GM12878 (cell line): ENCODE measurements at regions of chr1 and their contacts with region 1.

Region 1: GRCh38 chr1:220879076-220879508 is at the start of gene HLX:
- DNase-seq: no peak
- ATAC-seq: peak; percentile 82
- H3K4me3 ChIP-seq: peak within 1 kb of the TSS; percentile 68
- H3K27ac ChIP-seq: no peak within 1 kb of the TSS
- H3K4me1 ChIP-seq: peaks cover 15% of the 10 kb centered on the region
- H3K27me3 ChIP-seq: peaks cover 0 to 17% of the 10 kb centered on the region in 2 experiments; a peak in 3 of 4 replicates
- CTCF ChIP-seq: no peak
- EP300 ChIP-seq: no peak
- POLR2A ChIP-seq: no peak
- RAD21 ChIP-seq: no peak
- polyA plus RNA-seq, gene HLX: 0.11 to 0.22 TPM

Region 2: DNA sequence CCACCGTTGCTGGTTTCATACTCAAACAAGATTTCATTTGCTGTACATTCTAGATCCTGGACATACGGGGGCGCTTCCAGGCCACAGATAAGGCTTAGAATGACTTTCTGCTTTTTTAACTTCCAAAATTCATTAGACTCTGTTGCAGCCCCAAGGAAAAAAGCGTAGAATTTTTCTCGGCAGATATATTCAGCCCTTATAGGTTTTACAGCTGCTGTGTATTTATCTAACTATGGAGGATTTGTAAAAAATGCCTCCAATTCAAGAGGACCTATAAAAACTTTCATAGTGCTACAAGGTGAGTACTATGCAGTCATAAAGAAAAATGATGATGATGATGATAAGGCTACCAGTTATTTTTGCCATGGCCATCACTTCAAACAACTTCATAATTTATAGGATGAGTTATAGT is 1002.3 kb before region 1 on chr1:
- CTCF ChIA-PET with region 1: no interaction called
- POLR2A ChIA-PET with region 1: no interaction called
- RAD21 ChIA-PET with region 1: no interaction called
- SMC1A ChIA-PET with region 1: no interaction called
- in situ Hi-C with region 1: no loop called
- intact Hi-C with region 1: no loop called
- DNase-seq: no peak
- ATAC-seq: no peak
- H3K4me3 ChIP-seq: no peak overlapping the region
- H3K27ac ChIP-seq: no peak overlapping the region
- H3K4me1 ChIP-seq: no peaks in the 10 kb centered on the region
- H3K27me3 ChIP-seq: no peaks in the 10 kb centered on the region
- CTCF ChIP-seq: peak in 2 of 3 experiments; percentile 22 to 32; a peak in 3 of 6 replicates
- EP300 ChIP-seq: no peak
- POLR2A ChIP-seq: no peak
- RAD21 ChIP-seq: peak; percentile 47

Region 3: DNA sequence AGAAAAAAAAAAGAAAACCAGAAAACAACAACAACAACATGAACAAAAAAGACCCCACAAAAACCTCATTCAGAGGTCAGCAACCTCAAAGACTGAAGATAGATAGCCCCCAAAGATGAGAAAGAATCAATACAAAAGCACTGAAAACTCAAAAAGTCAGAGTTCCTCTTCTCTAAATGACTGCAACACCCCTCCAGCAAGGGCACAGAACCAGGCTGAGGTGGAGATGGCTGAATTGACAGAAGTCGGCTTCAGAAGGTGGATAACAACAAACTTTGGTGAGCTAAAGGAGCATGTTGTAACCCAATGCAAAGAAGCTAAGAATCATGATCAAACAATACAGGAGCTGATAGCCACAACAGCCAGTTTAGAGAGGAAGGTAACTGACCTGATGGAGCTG is 623.9 kb before region 1 on chr1:
- CTCF ChIA-PET with region 1: no interaction called
- POLR2A ChIA-PET with region 1: no interaction called
- RAD21 ChIA-PET with region 1: no interaction called
- SMC1A ChIA-PET with region 1: no interaction called
- in situ Hi-C with region 1: no loop called
- intact Hi-C with region 1: no loop called
- DNase-seq: no peak
- ATAC-seq: 0 out of 3 replicates have a peak, but pooled peaks have one; percentile 16
- H3K4me3 ChIP-seq: no peak overlapping the region
- H3K27ac ChIP-seq: no peak overlapping the region
- H3K4me1 ChIP-seq: no peaks in the 10 kb centered on the region
- H3K27me3 ChIP-seq: no peaks in the 10 kb centered on the region
- CTCF ChIP-seq: no peak
- EP300 ChIP-seq: no peak
- POLR2A ChIP-seq: no peak
- RAD21 ChIP-seq: no peak

Region 4: DNA sequence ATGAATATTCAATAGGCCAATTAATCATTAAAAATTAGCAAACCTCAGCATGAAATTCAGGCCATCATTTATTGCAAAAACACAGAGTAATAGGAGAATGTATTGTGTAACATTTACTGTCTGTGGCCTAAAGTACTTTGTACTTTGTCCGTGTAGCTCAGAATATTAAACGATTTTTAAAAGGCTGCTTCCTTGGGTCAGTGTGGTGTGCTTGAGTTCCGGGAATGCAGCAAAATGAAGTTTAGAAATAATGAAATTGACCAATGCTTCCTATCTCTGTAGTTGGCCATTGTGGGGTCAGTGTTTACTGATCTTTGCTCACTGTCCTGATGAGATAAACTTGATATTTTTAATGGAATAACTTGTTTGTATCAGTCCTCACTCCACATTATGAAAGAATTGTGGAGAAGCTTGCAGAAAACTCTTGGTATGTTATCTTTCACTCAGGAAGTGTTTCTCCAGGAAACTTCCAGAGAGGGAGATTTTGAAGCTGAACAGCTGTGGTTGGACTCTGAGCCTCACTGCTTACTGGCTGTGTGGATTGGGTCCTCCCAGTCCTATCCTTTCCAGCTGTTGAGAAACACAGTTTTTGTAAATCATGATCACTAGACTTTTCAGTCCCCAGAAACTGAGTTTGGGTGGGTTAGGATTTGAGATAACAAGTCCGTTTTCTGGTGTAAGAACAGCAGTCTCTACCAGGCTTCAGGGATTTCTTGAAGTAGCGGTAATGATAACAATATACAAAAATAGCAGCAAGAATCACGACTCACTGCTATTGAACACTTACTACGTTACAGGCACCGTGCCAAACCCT is 111.6 kb before region 1 on chr1:
- CTCF ChIA-PET with region 1: no interaction called
- POLR2A ChIA-PET with region 1: no interaction called
- RAD21 ChIA-PET with region 1: no interaction called
- SMC1A ChIA-PET with region 1: no interaction called
- in situ Hi-C with region 1: no loop called
- intact Hi-C with region 1: no loop called
- DNase-seq: no peak
- ATAC-seq: no peak
- H3K4me3 ChIP-seq: no peak overlapping the region
- H3K27ac ChIP-seq: no peak overlapping the region
- H3K4me1 ChIP-seq: no peaks in the 10 kb centered on the region; the same call in none of the 2 replicates
- H3K27me3 ChIP-seq: no peaks in the 10 kb centered on the region
- CTCF ChIP-seq: no peak
- EP300 ChIP-seq: no peak
- POLR2A ChIP-seq: no peak
- RAD21 ChIP-seq: no peak

Region 5: GRCh38 chr1:220841293-220841692 is 37.8 kb before region 1 on chr1:
- CTCF ChIA-PET with region 1: no interaction called
- POLR2A ChIA-PET with region 1: no interaction called
- RAD21 ChIA-PET with region 1: no interaction called
- SMC1A ChIA-PET with region 1: no interaction called
- in situ Hi-C with region 1: no loop called
- intact Hi-C with region 1: no loop called
- DNase-seq: no peak
- ATAC-seq: no peak
- H3K4me3 ChIP-seq: no peak overlapping the region
- H3K27ac ChIP-seq: no peak overlapping the region
- H3K4me1 ChIP-seq: no peaks in the 10 kb centered on the region
- H3K27me3 ChIP-seq: no peaks in the 10 kb centered on the region
- CTCF ChIP-seq: no peak
- EP300 ChIP-seq: no peak
- POLR2A ChIP-seq: no peak
- RAD21 ChIP-seq: no peak

Region 6: DNA sequence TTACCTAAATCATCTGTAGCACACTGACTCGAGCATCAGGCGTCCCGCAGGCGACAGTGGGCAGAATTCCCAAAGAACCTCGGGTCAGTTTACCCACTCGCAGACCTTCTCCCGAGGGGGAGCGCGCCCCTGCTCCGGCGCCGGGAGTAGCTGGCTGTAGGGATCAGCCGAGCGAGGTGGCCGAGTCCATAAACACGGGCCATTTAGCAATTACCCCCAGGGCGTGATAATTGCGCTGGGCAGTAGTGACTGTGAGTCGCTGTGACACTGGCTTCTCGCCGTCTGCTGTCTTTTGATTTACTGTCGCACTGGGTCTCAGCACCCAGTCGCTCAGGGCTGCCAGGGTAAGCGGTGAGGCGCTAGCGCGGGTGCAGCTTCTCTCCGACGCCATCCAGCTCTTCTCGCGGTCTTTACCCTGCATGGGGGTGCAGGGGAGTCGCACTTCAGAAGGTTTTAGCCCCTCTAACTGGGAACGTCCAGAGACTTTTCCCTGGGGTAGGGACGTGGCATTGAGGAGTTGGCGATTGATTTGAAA is 16.4 kb after region 1 on chr1:
- CTCF ChIA-PET with region 1: no interaction called
- POLR2A ChIA-PET with region 1: no interaction called
- RAD21 ChIA-PET with region 1: no interaction called
- SMC1A ChIA-PET with region 1: no interaction called
- in situ Hi-C with region 1: no loop called
- intact Hi-C with region 1: loop called (anchors 1 kb)
- DNase-seq: no peak
- ATAC-seq: no peak
- H3K4me3 ChIP-seq: no peak overlapping the region
- H3K27ac ChIP-seq: no peak overlapping the region
- H3K4me1 ChIP-seq: no peaks in the 10 kb centered on the region
- H3K27me3 ChIP-seq: peaks cover 12 to 14% of the 10 kb centered on the region in 2 experiments; a peak in 3 of 4 replicates
- CTCF ChIP-seq: no peak
- EP300 ChIP-seq: no peak
- POLR2A ChIP-seq: no peak
- RAD21 ChIP-seq: no peak

Region 7: DNA sequence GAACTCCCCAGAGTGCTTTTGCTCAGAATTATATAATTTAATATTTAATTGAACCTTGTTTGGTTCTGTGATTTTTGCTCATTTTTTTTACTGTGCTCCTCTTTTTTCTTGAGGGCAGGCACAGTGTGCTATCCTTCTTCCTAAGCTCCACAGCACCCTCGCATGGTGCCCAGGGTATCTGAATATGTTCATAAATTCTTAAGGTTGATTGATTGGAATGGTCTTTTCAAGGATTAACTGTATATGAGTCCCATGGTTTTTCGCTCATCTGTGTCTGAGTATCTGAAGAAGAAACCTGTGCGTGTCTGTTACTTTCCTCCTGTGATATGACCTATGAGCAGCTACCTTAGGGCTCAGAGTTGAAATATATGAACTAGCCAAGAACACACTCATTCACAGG is 393.8 kb after region 1 on chr1:
- CTCF ChIA-PET with region 1: interaction called, 13 read pairs
- POLR2A ChIA-PET with region 1: no interaction called
- RAD21 ChIA-PET with region 1: interaction called, 6 read pairs
- SMC1A ChIA-PET with region 1: interaction called, 10 read pairs
- in situ Hi-C with region 1: no loop called
- intact Hi-C with region 1: loop called (anchors 2 kb)
- DNase-seq: no peak
- ATAC-seq: peak; percentile 51; the same call in 1 of the 3 replicates
- H3K4me3 ChIP-seq: no peak overlapping the region
- H3K27ac ChIP-seq: no peak overlapping the region
- H3K4me1 ChIP-seq: no peaks in the 10 kb centered on the region
- H3K27me3 ChIP-seq: no peaks in the 10 kb centered on the region
- CTCF ChIP-seq: no peak; a peak in 1 of 6 replicates
- EP300 ChIP-seq: no peak
- POLR2A ChIP-seq: no peak
- RAD21 ChIP-seq: peak; percentile 20; the same call in 1 of the 2 replicates